HepG2 (cell line): ENCODE measurements at regions of chr14 and their contacts with region 1.

Region 1: GRCh38 chr14:35404449-35405303 is at the start of gene NFKBIA:
- DNase-seq: peak; percentile 93
- ATAC-seq: peak; percentile 78
- H3K4me3 ChIP-seq: peak within 1 kb of the TSS; percentile 88 to 99 (median 99)
- H3K27ac ChIP-seq: peak within 1 kb of the TSS; percentile 97
- H3K4me1 ChIP-seq: peaks cover 66% of the 10 kb centered on the region
- H3K27me3 ChIP-seq: no peaks in the 10 kb centered on the region; a peak in 2 of 5 replicates
- CTCF ChIP-seq: peak; percentile 75
- EP300 ChIP-seq: peak in 1 of 2 experiments; percentile 54; a peak in 3 of 4 replicates
- POLR2A ChIP-seq: peak in 1 of 2 experiments; percentile 97; a peak in 2 of 4 replicates
- RAD21 ChIP-seq: peak; percentile 96
- total RNA-seq, gene NFKBIA: 232 and 319 TPM in 2 replicates

Region 2: DNA sequence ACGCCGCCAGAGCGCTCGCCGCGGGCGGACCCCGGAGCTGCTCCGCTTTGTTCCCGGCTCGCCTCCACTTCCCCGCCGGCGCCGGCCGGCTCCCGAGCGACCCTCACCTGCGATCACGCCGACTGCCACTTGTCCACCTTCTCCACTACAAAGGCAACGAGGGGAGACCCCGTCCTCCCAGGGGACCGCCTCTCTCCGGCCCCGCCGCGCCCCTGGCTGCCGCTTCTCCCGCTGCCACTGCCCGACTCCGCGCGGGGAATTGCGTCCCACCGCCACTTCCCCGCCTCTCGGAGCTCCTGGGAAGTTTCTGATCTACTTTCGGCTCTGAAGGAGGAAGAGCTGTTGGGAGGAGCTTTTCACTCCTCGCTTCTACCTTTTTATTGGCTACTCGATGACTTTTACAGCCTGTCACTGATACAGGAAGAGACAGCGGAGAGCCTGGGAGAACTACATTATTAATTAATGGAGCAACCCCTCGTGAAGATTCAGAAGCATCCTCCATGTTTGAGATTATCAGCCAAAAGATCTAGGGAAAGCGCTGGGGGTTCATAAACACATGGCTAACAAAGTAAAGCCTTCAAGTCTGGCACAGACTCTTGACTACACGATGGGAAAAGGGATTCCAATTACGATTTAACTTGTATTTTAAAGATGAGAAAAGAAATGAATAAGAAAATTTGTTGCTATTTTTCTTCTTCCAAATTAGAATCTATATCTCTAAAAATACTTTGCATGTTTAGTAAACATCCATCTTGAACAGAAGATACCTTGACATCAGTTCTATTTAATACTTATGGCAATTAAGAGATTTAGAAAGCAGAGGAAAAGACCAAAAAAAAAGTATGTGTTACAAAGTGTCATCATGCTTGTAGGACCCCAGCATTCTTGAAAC is 529.4 kb before region 1 on chr14 and contains the start of gene BAZ1A:
- CTCF ChIA-PET with region 1: no interaction called
- POLR2A ChIA-PET with region 1: interaction called, 11 read pairs
- in situ Hi-C with region 1: no loop called
- intact Hi-C with region 1: no loop called
- DNase-seq: peak; percentile 93
- ATAC-seq: peak; percentile 46
- H3K4me3 ChIP-seq: peak within 1 kb of the TSS; percentile 82 to 89 (median 87)
- H3K27ac ChIP-seq: peak within 1 kb of the TSS; percentile 85
- H3K4me1 ChIP-seq: peaks cover 34% of the 10 kb centered on the region
- H3K27me3 ChIP-seq: no peaks in the 10 kb centered on the region; a peak in 1 of 5 replicates
- CTCF ChIP-seq: peak; percentile 37; the same call in 1 of the 2 replicates
- EP300 ChIP-seq: no peak
- POLR2A ChIP-seq: peak in 1 of 2 experiments; percentile 93; a peak in 2 of 4 replicates
- RAD21 ChIP-seq: no peak; the same call in none of the 2 replicates
- total RNA-seq, gene BAZ1A: 56.8 and 68.3 TPM in 2 replicates

Region 3: GRCh38 chr14:35140718-35141581 is 263.7 kb before region 1 on chr14:
- CTCF ChIA-PET with region 1: interaction called, 51 read pairs
- POLR2A ChIA-PET with region 1: interaction called, 98 read pairs
- in situ Hi-C with region 1: loop called (anchors 5 kb)
- intact Hi-C with region 1: loop called (anchors 1 kb)
- DNase-seq: peak; percentile 68
- ATAC-seq: no peak
- H3K4me3 ChIP-seq: no peak overlapping the region
- H3K27ac ChIP-seq: no peak overlapping the region
- H3K4me1 ChIP-seq: peaks cover 17% of the 10 kb centered on the region
- H3K27me3 ChIP-seq: no peaks in the 10 kb centered on the region
- CTCF ChIP-seq: peak; percentile 64
- EP300 ChIP-seq: no peak
- POLR2A ChIP-seq: no peak
- RAD21 ChIP-seq: peak; percentile 69

Region 4: GRCh38 chr14:35229495-35230089 is 175.1 kb before region 1 on chr14:
- CTCF ChIA-PET with region 1: interaction called, 18 read pairs
- POLR2A ChIA-PET with region 1: interaction called, 11 read pairs
- in situ Hi-C with region 1: no loop called
- intact Hi-C with region 1: loop called (anchors 1 kb)
- DNase-seq: peak; percentile 49
- ATAC-seq: peak; percentile 66
- H3K4me3 ChIP-seq: no peak overlapping the region
- H3K27ac ChIP-seq: no peak overlapping the region
- H3K4me1 ChIP-seq: no peaks in the 10 kb centered on the region
- H3K27me3 ChIP-seq: no peaks in the 10 kb centered on the region
- CTCF ChIP-seq: peak; percentile 58
- EP300 ChIP-seq: no peak
- POLR2A ChIP-seq: no peak
- RAD21 ChIP-seq: 0 out of 2 replicates have a peak, but pooled peaks have one; percentile 20

Region 5: GRCh38 chr14:35242599-35243311 is 161.9 kb before region 1 on chr14:
- CTCF ChIA-PET with region 1: no interaction called
- POLR2A ChIA-PET with region 1: no interaction called
- in situ Hi-C with region 1: no loop called
- intact Hi-C with region 1: no loop called
- DNase-seq: no peak
- ATAC-seq: no peak
- H3K4me3 ChIP-seq: no peak overlapping the region
- H3K27ac ChIP-seq: no peak overlapping the region
- H3K4me1 ChIP-seq: no peaks in the 10 kb centered on the region
- H3K27me3 ChIP-seq: no peaks in the 10 kb centered on the region
- CTCF ChIP-seq: no peak
- EP300 ChIP-seq: no peak
- POLR2A ChIP-seq: no peak
- RAD21 ChIP-seq: no peak

Region 6: DNA sequence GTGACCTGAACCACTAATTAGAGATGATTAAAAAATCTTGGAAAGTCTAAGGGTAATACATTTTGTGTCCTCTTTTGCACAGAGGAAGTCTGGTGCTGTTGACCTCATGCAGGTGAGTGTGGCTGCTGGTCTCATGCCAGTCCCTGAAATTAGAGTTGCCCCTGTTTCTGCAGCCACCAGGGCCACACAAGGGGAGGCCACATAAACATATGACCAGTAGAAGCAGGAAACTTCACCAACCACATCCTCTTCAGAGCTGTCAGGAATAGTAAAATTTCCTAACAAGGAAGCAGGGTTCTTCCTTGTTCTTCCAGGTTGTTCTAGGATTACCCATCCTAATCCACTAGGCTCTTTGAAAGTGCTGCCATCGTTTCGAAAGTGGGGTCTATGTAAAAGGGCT is 84.2 kb before region 1 on chr14:
- CTCF ChIA-PET with region 1: no interaction called
- POLR2A ChIA-PET with region 1: interaction called, 27 read pairs
- in situ Hi-C with region 1: no loop called
- intact Hi-C with region 1: no loop called
- DNase-seq: no peak
- ATAC-seq: peak; percentile 25
- H3K4me3 ChIP-seq: no peak overlapping the region
- H3K27ac ChIP-seq: no peak overlapping the region
- H3K4me1 ChIP-seq: no peaks in the 10 kb centered on the region
- H3K27me3 ChIP-seq: no peaks in the 10 kb centered on the region
- CTCF ChIP-seq: no peak
- EP300 ChIP-seq: no peak
- POLR2A ChIP-seq: no peak
- RAD21 ChIP-seq: no peak

Region 7: DNA sequence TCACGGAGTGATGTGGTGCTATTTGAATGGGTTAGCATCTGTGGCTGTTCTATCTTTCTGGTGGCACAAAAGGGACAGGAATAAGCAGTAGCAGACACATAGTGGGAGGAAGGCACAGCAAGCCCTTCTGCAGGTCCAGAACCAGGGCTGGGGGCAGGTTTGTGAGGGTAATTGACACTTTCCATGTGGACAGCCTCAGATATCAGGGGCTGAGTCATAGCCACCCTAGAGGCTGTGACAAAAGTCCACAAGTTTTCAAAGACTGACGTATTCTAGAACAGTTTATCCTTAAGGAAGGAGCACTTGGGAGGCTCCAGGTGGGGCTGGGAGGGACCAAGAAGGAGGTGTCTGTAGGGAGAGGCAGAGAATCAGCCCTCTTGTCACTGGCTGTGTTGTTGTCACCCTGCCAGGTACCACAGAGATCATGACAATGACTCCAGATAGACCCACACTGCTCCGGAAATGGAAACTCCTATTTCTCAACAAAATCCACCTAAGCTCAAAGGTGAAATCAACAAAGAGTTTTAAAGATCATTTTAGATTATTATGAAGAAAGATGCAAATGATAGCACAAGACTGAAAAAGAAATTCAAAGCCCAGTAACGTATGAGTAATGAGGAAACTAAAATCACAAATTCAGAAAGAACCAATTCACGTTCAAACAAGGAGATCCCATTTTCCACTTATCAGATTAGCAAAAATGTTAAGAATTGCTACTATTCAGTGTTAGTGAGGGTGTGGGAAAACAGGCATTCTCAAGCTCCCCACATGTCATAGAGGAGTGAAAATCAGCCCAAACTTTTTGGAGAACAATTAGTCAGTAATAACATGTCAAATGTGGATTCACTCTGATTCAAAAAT is 48.5 kb before region 1 on chr14:
- CTCF ChIA-PET with region 1: no interaction called
- POLR2A ChIA-PET with region 1: interaction called, 15 read pairs
- in situ Hi-C with region 1: no loop called
- intact Hi-C with region 1: no loop called
- DNase-seq: peak; percentile 91
- ATAC-seq: peak; percentile 81
- H3K4me3 ChIP-seq: peak overlapping the region; percentile 9 to 27 (median 12); a peak in 5 of 6 replicates
- H3K27ac ChIP-seq: peak overlapping the region; percentile 41
- H3K4me1 ChIP-seq: peaks cover 58% of the 10 kb centered on the region
- H3K27me3 ChIP-seq: no peaks in the 10 kb centered on the region
- CTCF ChIP-seq: no peak
- EP300 ChIP-seq: peak; percentile 8 to 82; a peak in 3 of 4 replicates
- POLR2A ChIP-seq: 0 out of 4 replicates have a peak, but pooled peaks of 1 of the 2 experiments have one; percentile 25
- RAD21 ChIP-seq: 0 out of 2 replicates have a peak, but pooled peaks have one; percentile 13

Region 8: DNA sequence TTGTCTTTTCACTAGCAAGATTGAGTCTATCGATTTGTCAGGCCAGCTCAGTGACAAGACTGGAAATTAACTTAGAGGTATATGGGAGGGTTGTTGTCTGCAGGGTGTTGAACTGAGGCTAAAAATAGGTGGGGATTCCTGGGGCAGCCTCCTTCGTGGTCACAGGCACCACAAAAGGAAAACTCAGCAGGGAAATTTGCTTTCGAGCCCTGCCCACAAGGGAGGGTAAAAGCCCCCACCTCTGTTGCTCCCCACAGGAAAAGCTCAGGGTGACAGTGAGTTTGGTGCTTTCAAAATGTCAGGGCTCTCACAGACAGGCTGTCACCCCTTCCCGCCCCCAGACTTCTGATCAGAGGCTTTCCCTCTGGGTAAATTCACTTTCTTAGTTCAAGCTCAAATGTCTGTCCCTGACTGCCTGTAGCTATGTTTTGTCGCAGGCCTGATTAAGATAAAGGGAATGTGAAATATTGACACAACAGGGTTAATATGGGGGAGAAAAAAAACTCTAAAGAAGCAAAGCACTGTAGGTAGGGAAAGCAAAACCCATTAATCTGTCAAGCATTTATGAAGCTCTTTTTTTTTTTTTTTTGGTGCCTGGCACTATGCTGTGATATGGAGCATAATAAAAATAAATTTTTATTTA is 11.6 kb after region 1 on chr14:
- CTCF ChIA-PET with region 1: no interaction called
- POLR2A ChIA-PET with region 1: interaction called, 29 read pairs
- in situ Hi-C with region 1: no loop called
- intact Hi-C with region 1: no loop called
- DNase-seq: no peak
- ATAC-seq: no peak
- H3K4me3 ChIP-seq: peak overlapping the region in 1 of 3 experiments; percentile 14; a peak in 1 of 6 replicates
- H3K27ac ChIP-seq: no peak overlapping the region
- H3K4me1 ChIP-seq: peaks cover 73% of the 10 kb centered on the region
- H3K27me3 ChIP-seq: peaks cover 4 to 12% of the 10 kb centered on the region in 2 experiments; a peak in 3 of 5 replicates
- CTCF ChIP-seq: no peak
- EP300 ChIP-seq: no peak
- POLR2A ChIP-seq: no peak
- RAD21 ChIP-seq: no peak

Region 9: GRCh38 chr14:35565871-35566464 is 161.3 kb after region 1 on chr14:
- CTCF ChIA-PET with region 1: no interaction called
- POLR2A ChIA-PET with region 1: no interaction called
- in situ Hi-C with region 1: no loop called
- intact Hi-C with region 1: no loop called
- DNase-seq: no peak
- ATAC-seq: no peak
- H3K4me3 ChIP-seq: no peak overlapping the region
- H3K27ac ChIP-seq: no peak overlapping the region
- H3K4me1 ChIP-seq: no peaks in the 10 kb centered on the region
- H3K27me3 ChIP-seq: no peaks in the 10 kb centered on the region
- CTCF ChIP-seq: no peak
- EP300 ChIP-seq: no peak
- POLR2A ChIP-seq: no peak
- RAD21 ChIP-seq: no peak

Region 10: GRCh38 chr14:35632676-35633075 is 228.0 kb after region 1 on chr14:
- CTCF ChIA-PET with region 1: no interaction called
- POLR2A ChIA-PET with region 1: no interaction called
- in situ Hi-C with region 1: no loop called
- intact Hi-C with region 1: no loop called
- DNase-seq: no peak
- ATAC-seq: no peak
- H3K4me3 ChIP-seq: no peak overlapping the region
- H3K27ac ChIP-seq: no peak overlapping the region
- H3K4me1 ChIP-seq: no peaks in the 10 kb centered on the region
- H3K27me3 ChIP-seq: no peaks in the 10 kb centered on the region
- CTCF ChIP-seq: no peak
- EP300 ChIP-seq: no peak
- POLR2A ChIP-seq: no peak
- RAD21 ChIP-seq: no peak